HepG2 (cell line): ENCODE measurements at regions of chr2 and their contacts with region 1.

Region 1: GRCh38 chr2:207769597-207770486 is at the start of gene FZD5:
- DNase-seq: peak; percentile 98
- ATAC-seq: peak; percentile 87
- H3K4me3 ChIP-seq: peak within 1 kb of the TSS; percentile 80 to 98 (median 88)
- H3K27ac ChIP-seq: peak within 1 kb of the TSS; percentile 92
- H3K4me1 ChIP-seq: peaks cover 55% of the 10 kb centered on the region
- H3K27me3 ChIP-seq: no peaks in the 10 kb centered on the region; a peak in 1 of 5 replicates
- CTCF ChIP-seq: peak; percentile 87
- EP300 ChIP-seq: peak in 1 of 2 experiments; percentile 44; a peak in 2 of 4 replicates
- POLR2A ChIP-seq: peak in 1 of 2 experiments; percentile 91; a peak in 2 of 4 replicates
- RAD21 ChIP-seq: peak; percentile 100
- total RNA-seq, gene FZD5: 28.9 and 34.3 TPM in 2 replicates

Region 2: GRCh38 chr2:207792244-207792785 is 22.5 kb after region 1 on chr2:
- CTCF ChIA-PET with region 1: interaction called, 3 read pairs
- POLR2A ChIA-PET with region 1: interaction called, 83 read pairs
- in situ Hi-C with region 1: no loop called
- intact Hi-C with region 1: loop called (anchors 1 kb)
- DNase-seq: peak; percentile 84
- ATAC-seq: peak; percentile 66
- H3K4me3 ChIP-seq: peak overlapping the region in 1 of 3 experiments; percentile 49; a peak in 2 of 6 replicates
- H3K27ac ChIP-seq: peak overlapping the region; percentile 82
- H3K4me1 ChIP-seq: peaks cover 73% of the 10 kb centered on the region
- H3K27me3 ChIP-seq: no peaks in the 10 kb centered on the region
- CTCF ChIP-seq: no peak
- EP300 ChIP-seq: peak in 1 of 2 experiments; percentile 16; a peak in 1 of 4 replicates
- POLR2A ChIP-seq: 0 out of 4 replicates have a peak, but pooled peaks have one; percentile 44 to 53
- RAD21 ChIP-seq: no peak

Region 3: DNA sequence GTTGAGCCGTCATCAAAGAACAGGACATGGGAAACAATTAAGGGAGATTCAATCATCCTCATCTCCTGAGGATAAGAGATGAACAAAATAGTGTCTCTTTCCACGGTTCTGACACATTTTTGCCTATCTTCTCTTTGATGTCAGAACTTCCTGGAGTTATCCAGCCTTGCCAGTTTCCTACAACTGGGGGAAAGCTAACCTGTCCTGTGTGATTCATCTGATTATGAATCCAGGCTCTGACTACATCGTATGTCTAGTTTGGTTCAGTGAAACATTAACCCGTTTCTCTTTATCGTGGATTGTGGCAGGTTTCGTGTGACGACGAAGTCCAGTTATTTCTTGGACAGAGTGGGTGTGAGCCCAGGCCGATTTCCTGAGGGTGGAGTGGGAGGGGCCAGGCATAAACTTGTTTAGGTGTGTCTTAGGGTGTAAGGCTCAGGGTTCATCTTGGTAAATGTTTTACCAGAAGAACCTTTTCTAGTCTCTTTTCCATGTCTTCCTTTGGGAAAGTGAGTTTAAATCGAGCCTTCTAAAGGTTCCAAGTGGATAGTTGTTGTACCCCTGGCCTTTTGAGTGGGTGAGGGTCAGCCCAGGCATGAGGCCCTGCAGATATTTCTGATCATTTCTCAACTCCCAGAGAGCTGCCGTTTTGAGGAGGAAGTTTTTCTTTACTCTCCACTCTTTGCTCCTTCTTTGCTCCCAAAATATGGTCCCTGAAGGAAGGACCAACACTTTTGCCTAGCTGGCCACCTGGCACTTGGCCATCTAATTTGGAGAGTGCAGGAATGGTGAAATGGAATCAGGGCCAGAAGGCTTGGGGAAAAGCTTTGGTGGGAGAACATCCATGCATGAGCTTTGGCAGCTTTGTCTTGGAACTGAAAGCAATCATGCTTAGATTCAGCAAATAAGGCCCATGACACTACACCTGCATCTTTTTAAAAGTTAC is 50.3 kb after region 1 on chr2:
- CTCF ChIA-PET with region 1: no interaction called
- POLR2A ChIA-PET with region 1: interaction called, 204 read pairs
- in situ Hi-C with region 1: loop called (anchors 5 kb)
- intact Hi-C with region 1: loop called (anchors 1 kb)
- DNase-seq: peak; percentile 97
- ATAC-seq: peak; percentile 89
- H3K4me3 ChIP-seq: peak overlapping the region; percentile 41 to 55 (median 53)
- H3K27ac ChIP-seq: peak overlapping the region; percentile 94
- H3K4me1 ChIP-seq: peaks cover 100% of the 10 kb centered on the region
- H3K27me3 ChIP-seq: no peaks in the 10 kb centered on the region
- CTCF ChIP-seq: no peak; the same call in 1 of the 2 replicates
- EP300 ChIP-seq: peak in 1 of 2 experiments; percentile 83; a peak in 3 of 4 replicates
- POLR2A ChIP-seq: peak; percentile 68 to 81
- RAD21 ChIP-seq: peak; percentile 40; the same call in 1 of the 2 replicates

Region 4: GRCh38 chr2:207879536-207879935 is 109.7 kb after region 1 on chr2:
- CTCF ChIA-PET with region 1: no interaction called
- POLR2A ChIA-PET with region 1: interaction called, 11 read pairs
- in situ Hi-C with region 1: no loop called
- intact Hi-C with region 1: no loop called
- DNase-seq: peak; percentile 80
- ATAC-seq: peak; percentile 95
- H3K4me3 ChIP-seq: no peak overlapping the region
- H3K27ac ChIP-seq: peak overlapping the region; percentile 25
- H3K4me1 ChIP-seq: peaks cover 52% of the 10 kb centered on the region
- H3K27me3 ChIP-seq: no peaks in the 10 kb centered on the region
- CTCF ChIP-seq: peak; percentile 52
- EP300 ChIP-seq: 0 out of 4 replicates have a peak, but pooled peaks of 1 of the 2 experiments have one; percentile 18
- POLR2A ChIP-seq: no peak
- RAD21 ChIP-seq: no peak

Region 5: DNA sequence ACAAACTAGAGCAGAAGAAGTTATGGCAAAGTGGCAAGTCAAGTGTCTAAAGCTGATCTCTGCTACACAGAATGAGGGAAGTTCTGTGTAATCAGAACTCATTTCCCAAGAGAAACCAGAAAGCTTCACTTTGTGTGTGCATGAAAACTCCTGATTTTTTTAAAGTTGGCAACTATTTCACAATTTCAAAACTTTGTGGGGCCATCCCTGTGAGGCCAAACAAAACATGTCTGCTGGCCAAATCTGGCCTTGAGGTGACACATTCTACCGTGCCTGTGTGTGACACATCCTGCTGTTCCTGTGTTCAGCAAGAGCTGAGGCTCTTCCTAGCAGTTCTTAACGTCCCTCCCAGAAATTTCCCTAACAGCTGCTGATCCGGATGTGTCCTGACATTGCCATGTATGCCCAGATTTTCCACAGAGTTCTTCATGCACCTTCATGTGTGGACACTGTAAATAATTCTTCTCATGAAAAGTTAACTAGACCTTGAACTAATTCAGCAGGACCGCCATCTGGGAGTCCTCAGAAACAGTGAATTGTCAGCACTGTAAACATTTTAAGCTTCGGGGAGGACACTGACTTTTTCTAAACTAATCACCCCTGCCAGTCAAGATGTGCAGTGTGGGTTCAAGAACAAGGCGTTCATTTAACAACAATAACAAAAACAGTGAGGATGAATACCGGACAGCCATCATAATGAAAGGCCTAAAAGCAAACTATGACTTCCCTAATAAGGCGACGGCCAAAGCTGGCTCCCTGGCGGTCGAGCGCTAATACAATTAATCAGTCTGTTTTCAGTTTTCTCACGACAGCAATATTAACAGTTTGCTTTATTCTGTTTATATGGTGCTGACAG is 156.5 kb after region 1 on chr2:
- CTCF ChIA-PET with region 1: no interaction called
- POLR2A ChIA-PET with region 1: interaction called, 10 read pairs
- in situ Hi-C with region 1: no loop called
- intact Hi-C with region 1: no loop called
- DNase-seq: peak; percentile 96
- ATAC-seq: peak; percentile 97
- H3K4me3 ChIP-seq: peak overlapping the region in 2 of 3 experiments; percentile 5 to 18; a peak in 2 of 6 replicates
- H3K27ac ChIP-seq: peak overlapping the region; percentile 66
- H3K4me1 ChIP-seq: peaks cover 51% of the 10 kb centered on the region
- H3K27me3 ChIP-seq: no peaks in the 10 kb centered on the region
- CTCF ChIP-seq: no peak
- EP300 ChIP-seq: peak; percentile 53 to 79; a peak in 3 of 4 replicates
- POLR2A ChIP-seq: peak in 1 of 2 experiments; percentile 17; a peak in 1 of 4 replicates
- RAD21 ChIP-seq: no peak; the same call in 1 of the 2 replicates

Region 6: GRCh38 chr2:208033758-208034502 is 264.1 kb after region 1 on chr2:
- CTCF ChIA-PET with region 1: interaction called, 11 read pairs
- POLR2A ChIA-PET with region 1: interaction called, 27 read pairs
- in situ Hi-C with region 1: no loop called
- intact Hi-C with region 1: loop called (anchors 1 kb)
- DNase-seq: peak; percentile 97
- ATAC-seq: peak; percentile 90
- H3K4me3 ChIP-seq: peak overlapping the region; percentile 4 to 16 (median 14); a peak in 2 of 6 replicates
- H3K27ac ChIP-seq: peak overlapping the region; percentile 70
- H3K4me1 ChIP-seq: peaks cover 70% of the 10 kb centered on the region
- H3K27me3 ChIP-seq: no peaks in the 10 kb centered on the region
- CTCF ChIP-seq: peak; percentile 98
- EP300 ChIP-seq: peak; percentile 53 to 55; a peak in 3 of 4 replicates
- POLR2A ChIP-seq: no peak
- RAD21 ChIP-seq: peak; percentile 91